CD14-positive monocyte (primary cell): ENCODE measurements at regions of chr3 and their contacts with region 1.

Region 1: GRCh38 chr3:195886181-195887141 is 21.9 kb downstream of the TNK2 start:
- DNase-seq: no peak
- H3K4me3 ChIP-seq: no peak overlapping the region
- H3K4me3 Mint-ChIP-seq: no peak overlapping the region
- H3K27ac ChIP-seq: no peak overlapping the region
- H3K27ac Mint-ChIP-seq: peak overlapping the region in 4 of 7 donors; percentile 25 to 59 (median 42)
- H3K4me1 ChIP-seq: no peaks in the 10 kb centered on the region
- H3K4me1 Mint-ChIP-seq: no peaks in the 10 kb centered on the region
- H3K27me3 ChIP-seq: no peaks in the 10 kb centered on the region
- H3K27me3 Mint-ChIP-seq: no peaks in the 10 kb centered on the region
- CTCF ChIP-seq: no peak

Region 2: GRCh38 chr3:195921334-195921791 is 34.9 kb after region 1 on chr3:
- intact Hi-C with region 1: loop called (anchors 5 kb)
- DNase-seq: no peak
- H3K4me3 ChIP-seq: no peak overlapping the region
- H3K4me3 Mint-ChIP-seq: no peak overlapping the region
- H3K27ac ChIP-seq: no peak overlapping the region
- H3K27ac Mint-ChIP-seq: no peak overlapping the region
- H3K4me1 ChIP-seq: peaks cover 0 to 6% of the 10 kb centered on the region in 2 donors
- H3K4me1 Mint-ChIP-seq: peaks cover 10% of the 10 kb centered on the region
- H3K27me3 ChIP-seq: no peaks in the 10 kb centered on the region
- H3K27me3 Mint-ChIP-seq: peaks cover 12 to 31% (median 20%) of the 10 kb centered on the region in 3 donors
- CTCF ChIP-seq: no peak

Region 3: DNA sequence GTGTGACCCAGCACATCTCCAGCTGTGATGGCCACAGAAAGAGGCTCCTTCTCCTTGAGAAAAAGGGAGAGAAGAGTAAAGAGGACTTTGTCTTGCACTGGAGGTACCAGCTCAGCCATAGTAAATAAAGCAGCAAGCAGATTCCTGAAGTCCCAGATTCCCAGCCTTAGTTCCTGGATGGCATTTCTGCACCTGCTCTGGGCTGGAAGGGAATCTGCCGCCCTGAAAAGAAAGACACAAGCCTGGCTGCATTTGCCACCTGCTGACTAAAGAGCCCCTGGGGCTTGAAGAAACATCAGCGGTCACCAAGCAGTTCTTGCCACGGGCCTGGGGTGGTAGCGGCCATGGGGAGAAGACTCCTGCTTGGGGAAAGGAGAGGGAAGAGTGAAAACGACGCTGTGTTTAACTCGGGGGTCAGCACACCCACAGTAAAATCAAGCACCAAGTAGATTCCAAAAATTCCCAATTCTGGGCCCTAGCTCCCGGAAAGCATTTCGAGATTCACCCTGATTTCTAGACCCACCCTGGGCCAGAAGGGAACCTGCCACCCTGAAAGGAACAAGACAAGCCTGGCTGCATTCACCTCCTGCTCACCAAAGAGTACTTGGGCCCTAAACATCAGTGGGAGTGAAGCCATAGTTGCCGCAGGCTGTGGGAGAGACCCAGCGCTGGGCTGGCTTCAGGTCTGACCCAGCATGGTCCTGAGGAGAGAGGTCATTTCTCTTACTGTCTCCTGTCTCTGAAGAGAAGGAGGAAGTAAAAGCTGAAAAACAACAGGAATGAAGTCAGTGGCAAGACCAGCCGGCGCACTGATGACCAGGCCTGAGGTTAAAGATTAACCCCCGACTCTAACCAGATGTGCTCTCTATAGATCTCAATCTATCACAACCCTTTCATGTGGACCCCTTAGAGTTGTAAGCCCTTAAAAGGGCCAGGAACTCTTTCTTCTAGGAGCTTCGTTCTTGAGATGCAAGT is 46.3 kb after region 1 on chr3:
- intact Hi-C with region 1: no loop called
- DNase-seq: no peak
- H3K4me3 ChIP-seq: no peak overlapping the region
- H3K4me3 Mint-ChIP-seq: peak overlapping the region in 1 of 2 donors; percentile 7
- H3K27ac ChIP-seq: no peak overlapping the region
- H3K27ac Mint-ChIP-seq: peak overlapping the region in 1 of 7 donors; percentile 32
- H3K4me1 ChIP-seq: no peaks in the 10 kb centered on the region
- H3K4me1 Mint-ChIP-seq: peaks cover 2% of the 10 kb centered on the region
- H3K27me3 ChIP-seq: peaks cover 0 to 2% of the 10 kb centered on the region in 2 donors
- H3K27me3 Mint-ChIP-seq: peaks cover 4 to 7% (median 6%) of the 10 kb centered on the region in 3 donors
- CTCF ChIP-seq: no peak

Region 4: DNA sequence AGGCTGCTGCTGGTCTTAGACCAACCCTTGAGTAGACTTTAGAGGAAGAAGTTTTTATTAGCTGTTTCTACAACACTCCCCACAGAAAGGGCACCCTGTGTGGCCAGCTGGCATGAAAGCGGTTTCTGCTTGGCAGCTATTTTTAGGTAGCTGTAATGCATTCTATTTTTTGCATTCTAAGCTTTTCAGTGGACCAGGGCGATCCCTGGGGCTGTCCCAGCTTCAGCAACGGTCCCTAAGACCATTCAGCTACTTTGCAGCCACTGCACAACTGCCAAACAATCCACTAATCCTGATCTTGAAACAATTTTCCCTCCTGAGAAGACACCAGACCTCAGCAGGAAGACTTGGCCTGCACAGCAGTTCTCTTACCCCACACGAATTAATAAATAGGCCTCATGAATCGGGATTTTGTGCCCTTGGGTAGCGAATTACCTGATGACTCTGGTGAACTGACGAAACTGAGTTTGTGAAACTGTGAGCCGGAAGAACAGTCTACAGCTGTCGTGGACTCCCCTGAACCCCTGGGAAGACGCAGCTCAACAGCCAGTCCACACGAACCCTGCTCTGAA is 210.0 kb after region 1 on chr3:
- intact Hi-C with region 1: no loop called
- DNase-seq: peak in 1 of 3 donors; percentile 27
- H3K4me3 ChIP-seq: peak overlapping the region in 1 of 3 experiments; percentile 39
- H3K4me3 Mint-ChIP-seq: no peak overlapping the region
- H3K27ac ChIP-seq: peak overlapping the region; percentile 35 to 70
- H3K27ac Mint-ChIP-seq: peak overlapping the region; percentile 49 to 94 (median 80)
- H3K4me1 ChIP-seq: peaks cover 49 to 61% of the 10 kb centered on the region in 2 donors
- H3K4me1 Mint-ChIP-seq: peaks cover 47% of the 10 kb centered on the region
- H3K27me3 ChIP-seq: no peaks in the 10 kb centered on the region
- H3K27me3 Mint-ChIP-seq: peaks cover 0 to 2% (median 1%) of the 10 kb centered on the region in 3 donors
- CTCF ChIP-seq: no peak